H1 (cell line): ENCODE measurements at regions of chr19 and their contacts with region 1.

Region 1: DNA sequence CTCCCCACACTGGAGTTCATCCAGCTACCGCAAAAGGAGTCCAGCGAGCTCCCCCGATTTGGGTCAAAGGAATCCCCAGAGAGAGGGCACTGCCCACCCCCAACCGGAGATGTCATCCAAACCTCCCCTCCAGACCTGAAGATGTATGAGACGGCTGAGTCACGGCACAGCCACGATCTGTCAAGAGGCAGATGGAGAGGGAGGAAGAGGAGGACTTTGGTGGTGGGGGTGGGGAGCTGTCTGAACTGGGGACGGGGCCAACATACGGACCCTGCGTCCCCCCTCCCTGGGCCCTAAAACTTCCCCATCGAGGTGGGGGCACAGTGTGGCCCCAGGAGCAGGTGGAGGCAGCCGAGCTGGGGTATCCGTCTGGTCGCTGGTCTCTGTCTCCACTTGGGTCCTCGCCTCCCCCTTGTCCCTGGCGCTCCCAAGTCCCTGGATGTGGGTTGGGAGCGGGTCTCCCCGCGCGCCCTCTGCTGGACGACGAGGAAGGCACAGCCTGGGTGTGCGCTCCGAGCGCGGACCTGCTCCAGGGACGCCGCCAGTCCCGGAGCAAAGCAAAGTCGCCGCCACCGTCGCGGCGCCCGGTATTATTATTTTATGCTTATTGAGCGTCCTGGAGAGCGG is 3.8 kb downstream of the PDE4A start:
- DNase-seq: peak in 1 of 2 experiments; percentile 97
- H3K4me3 ChIP-seq: peak overlapping the region; percentile 2 to 52 (median 32); a peak in 5 of 8 replicates
- H3K27ac ChIP-seq: no peak overlapping the region
- H3K4me1 ChIP-seq: peaks cover 0 to 18% (median 6%) of the 10 kb centered on the region in 4 experiments; a peak in 4 of 7 replicates
- H3K27me3 ChIP-seq: peaks cover 46 to 93% (median 78%) of the 10 kb centered on the region in 4 experiments
- CTCF ChIP-seq: peak; percentile 84 to 94 (median 84)
- EP300 ChIP-seq: no peak
- POLR2A ChIP-seq: no peak
- RAD21 ChIP-seq: peak; percentile 35 to 61

Region 2: GRCh38 chr19:10403137-10404021 is 20.7 kb before region 1 on chr19 and contains the start of gene CDC37:
- CTCF ChIA-PET with region 1: interaction called, 172 read pairs
- POLR2A ChIA-PET with region 1: interaction called, 33 read pairs
- DNase-seq: peak; percentile 86 to 99
- H3K4me3 ChIP-seq: peak within 1 kb of the TSS; percentile 71 to 98 (median 98)
- H3K27ac ChIP-seq: peak within 1 kb of the TSS; percentile 78
- H3K4me1 ChIP-seq: peaks cover 3 to 8% (median 5%) of the 10 kb centered on the region in 4 experiments; a peak in 5 of 7 replicates
- H3K27me3 ChIP-seq: peaks cover 3 to 15% (median 9%) of the 10 kb centered on the region in 4 experiments; a peak in 5 of 7 replicates
- CTCF ChIP-seq: peak in 2 of 3 experiments; percentile 0 to 10; a peak in 2 of 4 replicates
- EP300 ChIP-seq: no peak
- POLR2A ChIP-seq: peak in 1 of 2 experiments; percentile 95; a peak in 2 of 3 replicates
- RAD21 ChIP-seq: no peak
- total RNA-seq, gene CDC37: 162 and 164 TPM in 2 replicates

Region 3: DNA sequence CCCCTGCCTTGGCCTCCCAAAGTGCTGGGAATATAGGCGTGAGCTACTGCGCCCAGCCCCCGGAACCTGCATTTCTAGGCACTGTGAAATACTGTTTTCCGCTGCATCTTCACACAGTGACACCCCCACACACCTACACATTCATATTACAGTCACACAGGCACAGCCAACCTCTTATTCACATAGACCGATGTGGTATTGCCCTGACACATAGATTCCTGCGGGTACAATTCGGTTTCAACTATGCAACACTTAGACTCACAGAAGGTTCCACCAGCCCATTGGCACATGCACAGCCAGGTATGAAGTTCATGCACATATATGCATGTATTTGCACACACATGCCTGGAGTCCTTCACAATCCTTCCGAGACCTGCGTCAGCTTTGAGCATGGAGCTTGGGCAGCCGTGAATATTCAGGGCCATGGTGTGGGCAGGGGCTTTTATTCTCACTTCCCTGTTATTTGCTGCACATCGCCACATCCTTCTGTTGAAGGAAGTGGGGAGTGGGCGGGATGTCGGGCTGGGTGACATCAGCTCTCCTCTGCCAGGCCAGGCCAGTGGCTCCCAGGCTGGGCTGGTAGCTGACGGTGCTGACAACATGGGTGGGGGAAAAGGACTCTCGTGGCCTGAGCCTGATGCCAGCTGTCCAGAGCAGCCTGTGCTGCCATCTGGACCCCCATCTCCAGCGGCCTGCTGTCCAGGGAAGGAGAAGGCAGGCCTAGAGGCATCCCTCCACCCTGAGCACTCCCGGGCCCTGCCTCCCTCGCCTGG is 15.4 kb before region 1 on chr19:
- CTCF ChIA-PET with region 1: interaction called, 172 read pairs
- POLR2A ChIA-PET with region 1: interaction called, 33 read pairs
- DNase-seq: no peak
- H3K4me3 ChIP-seq: no peak overlapping the region
- H3K27ac ChIP-seq: no peak overlapping the region
- H3K4me1 ChIP-seq: peaks cover 3 to 8% (median 5%) of the 10 kb centered on the region in 4 experiments; a peak in 5 of 7 replicates
- H3K27me3 ChIP-seq: peaks cover 3 to 15% (median 9%) of the 10 kb centered on the region in 4 experiments; a peak in 5 of 7 replicates
- CTCF ChIP-seq: no peak
- EP300 ChIP-seq: no peak
- POLR2A ChIP-seq: no peak
- RAD21 ChIP-seq: no peak